WTC11 (cell line): ENCODE measurements at regions of chr14 and their contacts with region 1.

Region 1: GRCh38 chr14:74571901-74572725 is 39.9 kb downstream of the LTBP2 start:
- DNase-seq: no peak
- ATAC-seq: no peak
- H3K4me3 Mint-ChIP-seq: no peak overlapping the region
- H3K27ac Mint-ChIP-seq: 0 out of 2 replicates have a peak overlapping the region, but pooled peaks have one; percentile 53
- H3K4me1 Mint-ChIP-seq: peaks cover 31% of the 10 kb centered on the region
- H3K27me3 Mint-ChIP-seq: no peaks in the 10 kb centered on the region
- CTCF ChIP-seq: no peak

Region 2: DNA sequence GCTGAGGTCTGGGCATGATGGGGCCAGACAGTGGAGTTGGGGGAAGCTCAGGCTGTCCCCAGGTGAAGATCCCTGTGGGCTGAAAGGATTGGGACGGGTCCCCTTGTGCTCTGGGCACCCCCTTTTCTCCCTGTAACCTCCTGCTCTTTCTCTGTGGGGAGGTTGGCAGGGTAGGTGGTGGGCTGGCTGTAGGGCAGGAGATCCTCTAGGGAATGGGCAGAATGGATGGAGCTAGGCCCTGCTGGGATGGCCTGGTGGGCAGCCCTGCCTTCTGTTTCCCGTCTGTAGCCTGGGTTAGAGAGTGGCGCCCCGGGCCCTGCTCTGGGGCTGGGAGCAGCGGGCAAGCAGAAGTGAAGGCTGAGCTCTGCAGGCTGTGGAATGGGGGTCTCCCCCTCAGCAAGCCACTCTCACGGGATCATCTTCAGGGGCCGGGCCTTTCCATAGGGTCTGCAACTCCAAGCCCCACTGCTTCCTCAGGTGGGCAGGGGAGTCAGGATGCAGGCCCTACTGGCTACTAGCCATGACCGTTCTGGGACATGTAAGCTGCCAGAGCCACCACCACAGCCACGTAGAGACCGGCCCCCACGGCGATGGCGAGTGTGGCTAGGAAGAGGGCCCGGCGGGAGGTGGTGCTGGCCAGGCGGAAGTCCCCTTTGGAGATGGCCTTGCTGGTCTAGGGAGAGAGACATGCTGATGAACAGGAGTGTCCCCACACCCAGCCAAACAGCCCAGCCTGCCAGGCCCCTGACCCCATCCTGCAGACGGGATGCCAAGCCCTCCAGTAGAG is 164.9 kb before region 1 on chr14:
- CTCF ChIA-PET with region 1: no interaction called
- POLR2A ChIA-PET with region 1: no interaction called
- DNase-seq: no peak
- ATAC-seq: no peak
- H3K4me3 Mint-ChIP-seq: no peak overlapping the region
- H3K27ac Mint-ChIP-seq: no peak overlapping the region; the same call in 1 of the 2 replicates
- H3K4me1 Mint-ChIP-seq: peaks cover 10% of the 10 kb centered on the region
- H3K27me3 Mint-ChIP-seq: peaks cover 2% of the 10 kb centered on the region; the same call in 1 of the 2 replicates
- CTCF ChIP-seq: no peak

Region 3: GRCh38 chr14:74478996-74479635 is 93.0 kb before region 1 on chr14:
- CTCF ChIA-PET with region 1: no interaction called
- POLR2A ChIA-PET with region 1: no interaction called
- DNase-seq: no peak
- ATAC-seq: peak; percentile 77
- H3K4me3 Mint-ChIP-seq: no peak overlapping the region
- H3K27ac Mint-ChIP-seq: no peak overlapping the region
- H3K4me1 Mint-ChIP-seq: peaks cover 5% of the 10 kb centered on the region
- H3K27me3 Mint-ChIP-seq: no peaks in the 10 kb centered on the region
- CTCF ChIP-seq: peak; percentile 78

Region 4: GRCh38 chr14:74501135-74501614 is 70.9 kb before region 1 on chr14:
- CTCF ChIA-PET with region 1: interaction called, 27 read pairs
- POLR2A ChIA-PET with region 1: no interaction called
- DNase-seq: peak; percentile 79
- ATAC-seq: peak; percentile 87
- H3K4me3 Mint-ChIP-seq: no peak overlapping the region
- H3K27ac Mint-ChIP-seq: peak overlapping the region; percentile 91
- H3K4me1 Mint-ChIP-seq: peaks cover 34% of the 10 kb centered on the region
- H3K27me3 Mint-ChIP-seq: no peaks in the 10 kb centered on the region
- CTCF ChIP-seq: 0 out of 2 replicates have a peak, but pooled peaks have one; percentile 29

Region 5: DNA sequence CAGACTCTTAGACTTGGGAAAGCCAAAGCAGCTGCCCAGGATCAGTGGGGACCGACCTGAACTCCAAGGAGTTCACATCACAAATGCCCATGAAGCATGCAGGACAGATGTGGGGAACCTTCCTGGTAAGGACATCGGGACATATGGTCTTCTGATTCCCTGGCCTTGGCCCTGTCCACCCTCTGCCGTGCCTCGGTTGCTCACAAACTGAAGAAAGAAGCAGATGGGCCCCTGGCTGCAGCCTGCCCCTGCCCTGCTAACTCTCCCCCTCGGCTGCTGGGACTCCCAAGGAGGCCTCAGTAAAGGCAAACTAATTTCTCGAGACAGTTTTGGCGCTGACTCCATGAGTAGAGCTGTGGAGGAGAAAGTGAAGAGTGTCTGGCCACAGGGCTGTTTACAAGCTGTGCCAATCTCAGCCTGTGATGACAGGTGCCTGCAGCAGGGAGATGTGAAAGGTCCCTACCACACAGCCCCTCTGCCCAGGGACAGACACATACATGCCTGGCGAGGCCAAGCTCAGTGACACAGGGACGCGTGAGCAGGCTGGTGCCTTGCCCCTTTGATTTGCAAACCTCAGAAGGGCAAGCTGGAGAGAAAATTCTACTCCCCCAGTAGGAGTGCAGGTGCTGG is 29.9 kb before region 1 on chr14:
- CTCF ChIA-PET with region 1: interaction called, 14 read pairs
- POLR2A ChIA-PET with region 1: interaction called, 3 read pairs
- DNase-seq: no peak
- ATAC-seq: no peak
- H3K4me3 Mint-ChIP-seq: no peak overlapping the region
- H3K27ac Mint-ChIP-seq: no peak overlapping the region
- H3K4me1 Mint-ChIP-seq: no peaks in the 10 kb centered on the region
- H3K27me3 Mint-ChIP-seq: no peaks in the 10 kb centered on the region
- CTCF ChIP-seq: no peak

Region 6: DNA sequence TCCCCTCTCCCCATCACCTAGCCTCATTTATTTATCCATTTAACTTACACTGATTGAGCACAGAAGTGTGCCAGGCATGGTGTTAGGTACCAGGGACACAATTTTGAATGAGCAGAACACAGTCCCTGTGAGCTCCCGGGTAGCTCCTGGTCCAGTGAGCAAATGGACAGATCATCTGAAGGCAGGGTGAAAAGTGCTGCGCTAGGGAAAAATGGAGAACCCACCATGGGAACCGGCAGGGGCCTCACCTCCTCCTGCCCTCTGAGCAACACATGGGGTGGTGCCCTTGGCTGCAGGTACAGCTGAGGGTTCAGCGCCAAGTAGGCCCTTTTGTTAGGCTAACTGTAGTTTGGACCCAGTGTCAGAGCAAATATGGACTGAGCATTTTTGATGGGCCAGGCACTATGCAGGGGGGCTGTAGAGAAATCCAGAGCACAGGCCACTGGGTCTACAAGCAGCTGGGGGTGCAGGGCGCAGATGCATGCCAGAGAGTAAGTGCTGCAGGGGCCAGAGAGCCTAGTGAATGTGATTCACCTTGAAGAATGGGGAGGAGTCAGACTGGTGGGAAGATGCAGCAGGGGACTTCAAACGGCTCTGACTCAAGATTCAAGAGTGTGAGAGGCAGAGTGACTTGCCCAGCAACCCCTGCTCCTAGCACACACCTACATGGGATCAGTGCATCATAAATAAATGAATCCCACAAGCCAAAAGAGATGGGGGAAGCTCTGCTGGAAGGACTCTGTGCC is 11.7 kb after region 1 on chr14:
- CTCF ChIA-PET with region 1: interaction called, 50 read pairs
- POLR2A ChIA-PET with region 1: no interaction called
- DNase-seq: no peak
- ATAC-seq: no peak; the same call in 1 of the 2 replicates
- H3K4me3 Mint-ChIP-seq: no peak overlapping the region
- H3K27ac Mint-ChIP-seq: no peak overlapping the region
- H3K4me1 Mint-ChIP-seq: peaks cover 5% of the 10 kb centered on the region; the same call in 1 of the 2 replicates
- H3K27me3 Mint-ChIP-seq: no peaks in the 10 kb centered on the region
- CTCF ChIP-seq: no peak

Region 7: DNA sequence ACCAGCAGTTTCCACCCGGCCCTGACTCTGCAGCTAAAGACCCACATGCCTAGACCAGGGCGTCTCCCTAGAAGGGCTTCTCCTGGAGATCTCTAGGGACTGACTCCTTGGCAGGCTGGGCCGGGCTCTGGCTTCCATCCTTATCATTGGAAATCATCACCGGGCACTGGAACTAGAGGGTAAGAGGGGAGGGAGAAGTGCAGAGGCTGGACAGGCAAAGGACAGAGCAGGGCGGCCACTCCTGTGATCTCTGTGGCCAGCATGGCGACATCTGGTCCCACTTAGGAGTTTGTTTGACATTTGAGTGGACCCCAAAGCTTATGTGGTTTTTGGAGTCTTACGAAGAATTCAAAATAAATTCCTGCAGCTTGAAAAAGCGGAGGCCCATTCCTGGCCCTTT is 32.8 kb after region 1 on chr14:
- CTCF ChIA-PET with region 1: interaction called, 110 read pairs
- POLR2A ChIA-PET with region 1: interaction called, 4 read pairs
- DNase-seq: no peak
- ATAC-seq: no peak
- H3K4me3 Mint-ChIP-seq: no peak overlapping the region
- H3K27ac Mint-ChIP-seq: no peak overlapping the region
- H3K4me1 Mint-ChIP-seq: 0 out of 2 replicates have a peak, but pooled peaks cover 4% of the 10 kb centered on the region
- H3K27me3 Mint-ChIP-seq: peaks cover 11% of the 10 kb centered on the region
- CTCF ChIP-seq: no peak

Region 8: GRCh38 chr14:74804219-74804826 is 232.2 kb after region 1 on chr14:
- CTCF ChIA-PET with region 1: interaction called, 10 read pairs
- POLR2A ChIA-PET with region 1: no interaction called
- DNase-seq: no peak
- ATAC-seq: peak; percentile 48; the same call in 1 of the 2 replicates
- H3K4me3 Mint-ChIP-seq: no peak overlapping the region
- H3K27ac Mint-ChIP-seq: no peak overlapping the region; the same call in 1 of the 2 replicates
- H3K4me1 Mint-ChIP-seq: no peaks in the 10 kb centered on the region
- H3K27me3 Mint-ChIP-seq: no peaks in the 10 kb centered on the region
- CTCF ChIP-seq: no peak